ENCODE measurements at regions of chr3 and their contacts with region 1.

Region 1: GRCh38 chr3:158790901-158791589 is 10.8 kb upstream of the MFSD1 start:
- DNase-seq: peak; percentile 48
- ATAC-seq: peak; percentile 65
- H3K4me3 Mint-ChIP-seq: peak overlapping the region; percentile 49
- H3K27ac Mint-ChIP-seq: no peak overlapping the region
- H3K4me1 Mint-ChIP-seq: peaks cover 3% of the 10 kb centered on the region
- H3K27me3 Mint-ChIP-seq: no peaks in the 10 kb centered on the region

Region 2: GRCh38 chr3:158659454-158660237 is 131.4 kb before region 1 on chr3:
- CTCF ChIA-PET with region 1: interaction called, 45 read pairs
- POLR2A ChIA-PET with region 1: no interaction called
- DNase-seq: peak; percentile 73
- ATAC-seq: peak; percentile 67
- H3K4me3 Mint-ChIP-seq: no peak overlapping the region
- H3K27ac Mint-ChIP-seq: no peak overlapping the region
- H3K4me1 Mint-ChIP-seq: peaks cover 11% of the 10 kb centered on the region
- H3K27me3 Mint-ChIP-seq: no peaks in the 10 kb centered on the region

Region 3: GRCh38 chr3:158727206-158728060 is 63.6 kb before region 1 on chr3:
- CTCF ChIA-PET with region 1: interaction called, 129 read pairs
- POLR2A ChIA-PET with region 1: no interaction called
- DNase-seq: peak; percentile 74
- ATAC-seq: peak; percentile 62
- H3K4me3 Mint-ChIP-seq: no peak overlapping the region
- H3K27ac Mint-ChIP-seq: no peak overlapping the region
- H3K4me1 Mint-ChIP-seq: peaks cover 22% of the 10 kb centered on the region
- H3K27me3 Mint-ChIP-seq: no peaks in the 10 kb centered on the region

Region 4: GRCh38 chr3:158809642-158810041 is 18.6 kb after region 1 on chr3:
- CTCF ChIA-PET with region 1: interaction called, 12 read pairs
- POLR2A ChIA-PET with region 1: no interaction called
- DNase-seq: peak; percentile 51
- ATAC-seq: peak; percentile 86
- H3K4me3 Mint-ChIP-seq: no peak overlapping the region
- H3K27ac Mint-ChIP-seq: peak overlapping the region; percentile 76
- H3K4me1 Mint-ChIP-seq: peaks cover 26% of the 10 kb centered on the region
- H3K27me3 Mint-ChIP-seq: no peaks in the 10 kb centered on the region

Region 5: GRCh38 chr3:159045268-159045910 is 254.3 kb after region 1 on chr3:
- CTCF ChIA-PET with region 1: no interaction called
- POLR2A ChIA-PET with region 1: no interaction called
- DNase-seq: no peak
- ATAC-seq: no peak
- H3K4me3 Mint-ChIP-seq: no peak overlapping the region
- H3K27ac Mint-ChIP-seq: no peak overlapping the region
- H3K4me1 Mint-ChIP-seq: no peaks in the 10 kb centered on the region
- H3K27me3 Mint-ChIP-seq: no peaks in the 10 kb centered on the region

Measured in activated CD8-positive, alpha-beta T cell treated with anti-CD3 and anti-CD28 coated beads, Interleukin-2, amount 10 ng/mL, durations not matched to agents 7 days and 5 days (primary cell).